B cell (primary cell): ENCODE measurements at regions of chr15 and their contacts with region 1.

Region 1: DNA sequence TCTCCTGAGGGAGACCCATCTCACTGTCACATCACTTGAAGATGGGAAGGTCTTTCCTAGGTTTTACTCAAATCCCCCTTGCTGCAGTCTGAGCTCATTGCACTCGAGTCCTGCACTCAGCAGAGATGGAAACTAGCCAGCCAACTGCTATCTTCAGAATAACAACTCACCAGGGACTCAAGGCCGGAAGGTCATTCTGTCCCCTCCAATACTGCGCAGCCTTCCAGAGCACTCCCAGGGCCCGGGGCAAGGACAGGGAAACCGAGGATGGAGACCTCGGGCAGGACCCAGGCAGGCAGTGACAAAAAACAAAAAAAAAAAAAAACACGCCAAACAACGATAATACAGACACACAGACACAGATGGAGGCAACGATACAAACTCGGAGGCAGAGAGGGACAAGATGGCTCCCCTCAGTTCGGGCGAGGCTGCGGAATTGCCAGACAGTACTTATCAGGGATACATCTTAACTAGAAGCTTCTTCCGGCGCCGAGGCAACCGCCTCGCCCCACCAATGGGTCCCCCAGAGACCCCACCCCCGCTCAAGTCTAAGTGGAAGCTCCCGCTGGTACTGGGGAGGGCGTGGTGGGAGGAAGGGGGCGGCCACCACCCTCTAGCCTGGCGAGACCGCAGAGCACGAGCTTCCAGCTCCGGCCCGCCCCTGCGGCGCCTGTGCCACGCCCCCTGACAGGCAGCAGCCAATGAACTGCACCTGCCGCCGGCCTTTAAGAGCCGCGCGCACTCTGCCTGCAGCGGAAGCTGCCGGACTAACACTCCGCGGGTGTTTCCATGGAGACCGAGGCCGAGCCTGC is 7.0 kb upstream of the MAP1A start:
- DNase-seq: peak; percentile 99
- ATAC-seq: peak; percentile 96
- H3K4me3 ChIP-seq: peak overlapping the region; percentile 70 to 98 (median 72)
- H3K4me3 Mint-ChIP-seq: peak overlapping the region; percentile 99
- H3K27ac ChIP-seq: peak overlapping the region; percentile 61 to 71
- H3K27ac Mint-ChIP-seq: peak overlapping the region; percentile 98
- H3K4me1 ChIP-seq: peaks cover 10 to 16% of the 10 kb centered on the region in 2 donors
- H3K4me1 Mint-ChIP-seq: peaks cover 17% of the 10 kb centered on the region
- H3K27me3 ChIP-seq: peaks cover 0 to 16% (median 5%) of the 10 kb centered on the region in 4 experiments
- H3K27me3 Mint-ChIP-seq: peaks cover 18% of the 10 kb centered on the region
- CTCF ChIP-seq: peak; percentile 12

Region 2: DNA sequence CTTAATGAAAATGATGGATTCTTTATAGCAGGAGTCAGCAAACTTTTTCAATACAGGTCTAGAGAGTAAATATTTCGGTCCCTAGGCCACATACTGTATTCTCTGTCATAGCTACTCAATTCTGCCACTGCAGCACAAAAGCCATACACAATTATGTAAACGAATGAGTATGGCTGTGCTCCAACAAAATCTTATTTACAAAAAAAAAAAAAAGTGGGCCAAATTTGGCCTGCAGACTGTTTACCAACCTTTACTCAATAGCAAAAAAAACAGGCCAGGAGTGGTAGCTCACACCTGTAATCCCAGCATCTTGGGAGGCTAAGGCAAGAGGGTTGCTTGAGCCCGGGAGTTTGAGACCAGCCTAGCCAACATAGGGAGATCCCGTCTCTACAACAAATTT is 631.0 kb before region 1 on chr15:
- CTCF ChIA-PET with region 1: no interaction called
- POLR2A ChIA-PET with region 1: no interaction called
- intact Hi-C with region 1: no loop called
- DNase-seq: no peak
- ATAC-seq: no peak
- H3K4me3 ChIP-seq: no peak overlapping the region
- H3K4me3 Mint-ChIP-seq: no peak overlapping the region
- H3K27ac ChIP-seq: no peak overlapping the region
- H3K27ac Mint-ChIP-seq: no peak overlapping the region
- H3K4me1 ChIP-seq: no peaks in the 10 kb centered on the region
- H3K4me1 Mint-ChIP-seq: no peaks in the 10 kb centered on the region
- H3K27me3 ChIP-seq: no peaks in the 10 kb centered on the region
- H3K27me3 Mint-ChIP-seq: no peaks in the 10 kb centered on the region
- CTCF ChIP-seq: no peak

Region 3: DNA sequence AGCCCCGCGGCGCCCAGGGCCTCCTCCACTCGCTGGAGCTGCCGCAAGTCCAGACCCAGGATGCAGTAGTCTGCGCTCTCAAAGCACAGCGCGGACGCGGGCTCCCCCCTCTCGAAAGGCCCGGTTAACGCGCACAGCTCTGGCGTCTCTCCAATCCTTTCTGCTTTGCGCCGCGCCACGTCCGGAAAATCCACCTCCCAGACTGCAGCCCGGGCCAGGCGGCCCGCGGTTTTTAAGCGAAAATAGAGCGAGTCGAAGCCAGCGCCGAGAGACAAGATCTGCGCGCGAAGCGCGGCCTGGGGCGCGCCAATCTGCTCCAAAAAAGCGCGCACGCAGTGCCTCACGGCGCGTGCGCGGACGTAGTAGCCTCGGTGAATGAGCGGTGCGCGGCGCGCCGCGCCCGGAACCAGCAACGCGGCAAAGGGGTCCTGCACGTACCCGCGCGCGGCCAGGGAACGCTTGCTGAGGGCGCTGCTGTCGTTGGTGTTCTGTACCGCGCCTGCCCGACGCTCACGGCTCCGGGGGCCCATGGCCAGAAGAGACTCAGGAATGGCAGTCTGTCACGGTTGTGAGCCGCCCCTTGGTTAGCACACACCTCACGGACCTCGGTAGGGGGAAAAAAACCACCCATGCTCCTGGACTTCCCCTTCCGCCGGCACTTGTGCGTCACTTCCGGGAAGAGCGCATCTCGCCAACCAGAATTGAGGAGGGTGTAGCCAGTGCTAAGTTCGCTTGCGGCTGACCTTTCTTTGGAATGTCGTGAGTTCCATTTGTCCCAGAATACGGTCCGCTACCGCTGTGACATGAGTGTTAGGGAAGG is 180.2 kb before region 1 on chr15 and contains the start of gene LCMT2:
- CTCF ChIA-PET with region 1: no interaction called
- POLR2A ChIA-PET with region 1: no interaction called
- intact Hi-C with region 1: loop called (anchors 1 kb)
- DNase-seq: peak; percentile 98
- ATAC-seq: peak; percentile 88
- H3K4me3 ChIP-seq: peak within 1 kb of the TSS; percentile 70 to 88 (median 84)
- H3K4me3 Mint-ChIP-seq: peak within 1 kb of the TSS; percentile 99
- H3K27ac ChIP-seq: peak within 1 kb of the TSS; percentile 94 to 98
- H3K27ac Mint-ChIP-seq: peak within 1 kb of the TSS; percentile 100
- H3K4me1 ChIP-seq: peaks cover 22 to 23% of the 10 kb centered on the region in 2 donors
- H3K4me1 Mint-ChIP-seq: peaks cover 32% of the 10 kb centered on the region
- H3K27me3 ChIP-seq: no peaks in the 10 kb centered on the region
- H3K27me3 Mint-ChIP-seq: no peaks in the 10 kb centered on the region
- CTCF ChIP-seq: peak; percentile 9
- total RNA-seq, gene LCMT2: 12.8 and 16.2 TPM in 2 replicates

Region 4: DNA sequence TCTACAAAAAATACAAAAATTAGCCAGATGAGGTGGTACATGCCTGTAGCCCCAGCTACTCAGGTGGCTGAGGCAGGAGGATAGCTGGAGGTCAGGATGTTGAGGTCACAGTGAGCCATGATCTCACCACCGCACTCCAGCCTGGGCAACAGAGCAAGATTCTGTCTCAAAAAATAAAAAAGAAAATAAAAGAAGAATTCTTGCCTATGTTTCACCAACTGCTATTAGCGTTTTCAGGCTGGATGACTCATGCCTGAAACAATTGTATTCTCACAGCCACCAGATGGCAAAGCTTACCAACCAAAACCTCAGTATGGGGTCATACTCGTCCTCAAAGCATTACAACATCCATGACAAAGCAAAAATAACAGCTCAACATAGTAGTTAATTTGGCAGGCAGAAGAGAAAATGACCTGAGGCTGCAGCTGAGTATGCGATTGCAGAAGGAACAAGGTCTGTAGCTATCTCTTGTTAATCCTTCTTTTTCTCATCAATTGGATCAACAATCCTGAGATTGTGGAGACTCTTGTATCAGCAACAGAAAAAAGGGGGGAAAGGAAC is 69.6 kb before region 1 on chr15:
- CTCF ChIA-PET with region 1: interaction called, 17 read pairs
- POLR2A ChIA-PET with region 1: no interaction called
- intact Hi-C with region 1: no loop called
- DNase-seq: peak; percentile 18
- ATAC-seq: no peak
- H3K4me3 ChIP-seq: no peak overlapping the region
- H3K4me3 Mint-ChIP-seq: no peak overlapping the region
- H3K27ac ChIP-seq: no peak overlapping the region
- H3K27ac Mint-ChIP-seq: peak overlapping the region; percentile 11
- H3K4me1 ChIP-seq: no peaks in the 10 kb centered on the region
- H3K4me1 Mint-ChIP-seq: no peaks in the 10 kb centered on the region
- H3K27me3 ChIP-seq: no peaks in the 10 kb centered on the region
- H3K27me3 Mint-ChIP-seq: no peaks in the 10 kb centered on the region
- CTCF ChIP-seq: no peak

Region 5: DNA sequence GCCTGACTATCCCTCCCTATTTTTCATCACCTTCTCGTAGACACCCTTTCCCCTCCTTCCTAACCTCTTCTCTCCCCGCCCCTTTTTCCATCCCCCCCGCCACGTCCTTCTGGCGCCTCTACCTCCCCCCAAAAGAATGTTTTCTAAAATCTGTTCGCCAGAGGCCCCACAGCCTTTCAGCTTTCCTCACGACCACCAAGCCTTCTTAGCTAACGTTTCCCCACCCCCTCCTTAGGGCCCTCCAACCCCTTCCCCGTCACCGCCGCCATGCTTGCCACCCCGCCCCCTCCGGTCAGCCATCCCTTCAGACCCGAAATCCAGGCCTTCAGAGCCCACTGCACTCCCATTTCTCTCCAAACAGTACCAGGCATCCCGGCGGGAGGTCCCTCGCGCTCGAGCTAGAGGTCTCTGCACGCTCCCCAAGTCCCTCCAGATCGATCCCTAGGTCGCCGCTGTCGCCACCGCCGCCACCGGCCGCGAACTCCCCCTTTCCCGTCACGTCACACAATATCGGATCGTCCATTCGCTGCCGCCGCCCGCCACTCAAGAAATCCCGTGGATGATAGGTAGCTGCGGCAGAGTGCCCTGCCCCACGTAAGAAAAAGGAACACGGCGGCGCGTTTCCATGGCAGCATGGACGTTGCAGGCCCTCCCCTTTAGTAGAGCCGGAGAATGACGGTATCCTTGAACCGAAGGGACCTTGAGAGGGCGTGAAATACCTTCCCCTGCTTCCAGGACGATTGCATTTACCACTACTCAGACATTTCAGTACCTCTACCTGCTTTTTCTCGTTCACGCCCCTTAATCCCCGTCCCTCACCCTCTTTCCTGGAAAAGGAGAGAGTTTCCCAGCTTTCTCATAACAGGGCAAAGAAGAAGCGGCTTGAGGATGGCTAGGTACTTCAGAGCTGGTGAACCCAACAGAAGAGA is 17.5 kb before region 1 on chr15 and contains the start of gene TP53BP1:
- CTCF ChIA-PET with region 1: interaction called, 97 read pairs
- POLR2A ChIA-PET with region 1: interaction called, 13 read pairs
- intact Hi-C with region 1: loop called (anchors 1 kb)
- DNase-seq: peak; percentile 96
- ATAC-seq: peak; percentile 99
- H3K4me3 ChIP-seq: peak within 1 kb of the TSS; percentile 76 to 92 (median 80)
- H3K4me3 Mint-ChIP-seq: peak within 1 kb of the TSS; percentile 92
- H3K27ac ChIP-seq: peak within 1 kb of the TSS; percentile 70 to 98
- H3K27ac Mint-ChIP-seq: peak within 1 kb of the TSS; percentile 95
- H3K4me1 ChIP-seq: peaks cover 11% of the 10 kb centered on the region in 2 donors
- H3K4me1 Mint-ChIP-seq: peaks cover 23% of the 10 kb centered on the region
- H3K27me3 ChIP-seq: no peaks in the 10 kb centered on the region
- H3K27me3 Mint-ChIP-seq: no peaks in the 10 kb centered on the region
- CTCF ChIP-seq: no peak
- total RNA-seq, gene TP53BP1: 70.5 and 88.4 TPM in 2 replicates

Region 6: DNA sequence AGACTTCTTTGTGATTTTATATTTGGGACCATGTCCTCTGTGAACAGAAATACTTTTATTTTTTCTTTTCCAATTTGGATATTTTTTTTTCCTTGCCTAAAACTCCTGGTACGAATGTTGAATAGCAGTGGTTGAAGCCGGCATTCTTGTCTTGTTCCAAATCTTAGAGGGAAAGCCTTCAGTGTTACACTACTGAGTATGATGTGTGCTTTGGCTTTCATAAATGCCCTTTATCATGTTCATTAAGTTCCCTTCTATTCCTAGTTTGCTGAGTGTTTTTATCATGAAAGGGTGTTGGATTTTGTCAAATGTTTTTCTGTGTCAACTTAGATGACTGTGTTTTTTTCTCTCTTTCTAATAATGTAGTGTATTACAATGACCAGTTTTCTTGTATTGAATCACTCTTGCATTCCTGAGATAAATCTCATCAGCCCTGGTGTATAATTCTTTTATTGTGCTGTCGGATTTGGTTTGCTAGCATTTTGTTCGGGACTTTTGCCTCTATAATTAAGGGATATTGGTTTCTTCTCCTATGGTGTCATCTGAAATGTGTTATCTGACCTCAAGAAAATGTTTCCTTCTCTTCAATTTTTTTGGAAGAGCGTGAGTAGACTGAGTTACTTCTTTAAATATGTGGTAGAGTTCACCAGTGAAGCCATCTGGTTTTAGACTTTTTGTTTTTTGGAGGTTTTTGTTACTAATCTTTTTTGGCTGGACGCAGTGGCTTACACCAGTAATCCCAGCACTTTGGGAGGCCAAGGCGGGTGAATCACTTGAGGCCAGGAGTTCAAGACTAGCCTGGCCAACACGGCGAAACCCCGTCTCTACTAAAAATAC is 40.3 kb after region 1 on chr15:
- CTCF ChIA-PET with region 1: no interaction called
- POLR2A ChIA-PET with region 1: no interaction called
- intact Hi-C with region 1: no loop called
- DNase-seq: no peak
- ATAC-seq: no peak
- H3K4me3 ChIP-seq: no peak overlapping the region
- H3K4me3 Mint-ChIP-seq: no peak overlapping the region
- H3K27ac ChIP-seq: no peak overlapping the region
- H3K27ac Mint-ChIP-seq: no peak overlapping the region
- H3K4me1 ChIP-seq: no peaks in the 10 kb centered on the region
- H3K4me1 Mint-ChIP-seq: no peaks in the 10 kb centered on the region
- H3K27me3 ChIP-seq: no peaks in the 10 kb centered on the region
- H3K27me3 Mint-ChIP-seq: no peaks in the 10 kb centered on the region
- CTCF ChIP-seq: no peak

Region 7: GRCh38 chr15:43749690-43750345 is 239.4 kb after region 1 on chr15:
- CTCF ChIA-PET with region 1: no interaction called
- POLR2A ChIA-PET with region 1: no interaction called
- intact Hi-C with region 1: loop called (anchors 1 kb)
- DNase-seq: peak; percentile 86
- ATAC-seq: peak; percentile 40
- H3K4me3 ChIP-seq: peak overlapping the region in 4 of 5 experiments; percentile 16 to 57 (median 39)
- H3K4me3 Mint-ChIP-seq: peak overlapping the region; percentile 80
- H3K27ac ChIP-seq: peak overlapping the region; percentile 58 to 76
- H3K27ac Mint-ChIP-seq: peak overlapping the region; percentile 90
- H3K4me1 ChIP-seq: peaks cover 50 to 58% of the 10 kb centered on the region in 2 donors
- H3K4me1 Mint-ChIP-seq: peaks cover 56% of the 10 kb centered on the region
- H3K27me3 ChIP-seq: no peaks in the 10 kb centered on the region
- H3K27me3 Mint-ChIP-seq: no peaks in the 10 kb centered on the region
- CTCF ChIP-seq: no peak

Region 8: GRCh38 chr15:44286814-44287452 is 776.5 kb after region 1 on chr15:
- CTCF ChIA-PET with region 1: no interaction called
- POLR2A ChIA-PET with region 1: no interaction called
- intact Hi-C with region 1: loop called (anchors 5 kb)
- DNase-seq: peak; percentile 25
- ATAC-seq: no peak
- H3K4me3 ChIP-seq: peak overlapping the region in 4 of 5 experiments; percentile 84 to 100 (median 99)
- H3K4me3 Mint-ChIP-seq: peak overlapping the region; percentile 95
- H3K27ac ChIP-seq: peak overlapping the region; percentile 77 to 95
- H3K27ac Mint-ChIP-seq: peak overlapping the region; percentile 97
- H3K4me1 ChIP-seq: peaks cover 22 to 29% of the 10 kb centered on the region in 2 donors
- H3K4me1 Mint-ChIP-seq: peaks cover 37% of the 10 kb centered on the region
- H3K27me3 ChIP-seq: no peaks in the 10 kb centered on the region
- H3K27me3 Mint-ChIP-seq: peaks cover 4% of the 10 kb centered on the region
- CTCF ChIP-seq: peak; percentile 46